ENCODE measurements at regions of chr11 and their contacts with region 1.

Region 1: GRCh38 chr11:61792310-61793085 is at the starts of genes FEN1 and TMEM258:
- DNase-seq: peak; percentile 87
- H3K4me3 Mint-ChIP-seq: peak within 1 kb of the TSS; percentile 98
- H3K27ac Mint-ChIP-seq: peak within 1 kb of the TSS; percentile 99
- H3K4me1 Mint-ChIP-seq: peaks cover 45% of the 10 kb centered on the region
- H3K27me3 Mint-ChIP-seq: no peaks in the 10 kb centered on the region
- total RNA-seq, gene FEN1: 130 and 131 TPM in 2 replicates
- total RNA-seq, gene TMEM258: 187 and 192 TPM in 2 replicates

Region 2: GRCh38 chr11:61679893-61680621 is 112.4 kb before region 1 on chr11 and contains the start of gene DAGLA:
- intact Hi-C with region 1: no loop called
- DNase-seq: peak; percentile 64
- H3K4me3 Mint-ChIP-seq: peak within 1 kb of the TSS; percentile 40
- H3K27ac Mint-ChIP-seq: no peak within 1 kb of the TSS
- H3K4me1 Mint-ChIP-seq: no peaks in the 10 kb centered on the region
- H3K27me3 Mint-ChIP-seq: peaks cover 12% of the 10 kb centered on the region
- total RNA-seq, gene DAGLA: 0.07 TPM in 2 replicates

Region 3: DNA sequence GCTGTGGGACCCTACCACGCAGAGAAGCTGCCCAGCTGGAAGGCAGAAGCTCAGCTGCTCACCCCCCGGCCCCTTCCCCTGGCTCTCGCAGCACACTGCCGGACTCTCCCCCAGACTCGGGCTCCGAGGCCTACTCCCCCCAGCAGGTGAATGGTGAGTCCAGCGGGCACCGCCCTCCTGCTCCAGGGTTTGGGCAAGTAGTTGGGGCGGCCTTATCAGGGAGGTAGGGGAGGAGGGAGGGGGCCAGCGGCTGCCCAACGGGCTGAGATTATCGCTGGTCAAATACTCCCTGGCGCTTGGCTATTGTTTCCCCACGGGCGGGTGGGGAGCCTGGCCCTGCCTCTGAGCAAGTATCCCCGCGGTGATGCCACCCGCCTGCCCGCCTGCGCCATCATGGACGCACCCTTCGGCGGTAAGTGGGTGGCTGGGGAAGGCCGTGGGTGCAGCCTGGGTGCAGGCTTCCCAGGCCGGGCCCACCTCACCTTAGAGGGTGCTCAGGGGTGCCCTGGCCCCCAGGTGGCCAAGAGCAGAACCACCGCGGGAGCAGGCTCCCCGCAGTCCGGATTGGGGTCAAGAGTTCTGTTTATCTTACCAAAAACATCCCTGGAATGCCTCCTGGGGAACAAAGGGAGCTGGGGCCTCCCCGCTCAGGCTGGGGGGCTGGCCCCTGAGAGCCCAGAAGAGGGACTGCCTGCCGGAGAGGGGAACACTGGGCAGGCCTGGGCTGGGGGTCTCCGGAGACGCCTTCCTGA is 23.2 kb before region 1 on chr11:
- intact Hi-C with region 1: no loop called
- DNase-seq: no peak
- H3K4me3 Mint-ChIP-seq: no peak overlapping the region
- H3K27ac Mint-ChIP-seq: no peak overlapping the region
- H3K4me1 Mint-ChIP-seq: no peaks in the 10 kb centered on the region
- H3K27me3 Mint-ChIP-seq: no peaks in the 10 kb centered on the region

Region 4: DNA sequence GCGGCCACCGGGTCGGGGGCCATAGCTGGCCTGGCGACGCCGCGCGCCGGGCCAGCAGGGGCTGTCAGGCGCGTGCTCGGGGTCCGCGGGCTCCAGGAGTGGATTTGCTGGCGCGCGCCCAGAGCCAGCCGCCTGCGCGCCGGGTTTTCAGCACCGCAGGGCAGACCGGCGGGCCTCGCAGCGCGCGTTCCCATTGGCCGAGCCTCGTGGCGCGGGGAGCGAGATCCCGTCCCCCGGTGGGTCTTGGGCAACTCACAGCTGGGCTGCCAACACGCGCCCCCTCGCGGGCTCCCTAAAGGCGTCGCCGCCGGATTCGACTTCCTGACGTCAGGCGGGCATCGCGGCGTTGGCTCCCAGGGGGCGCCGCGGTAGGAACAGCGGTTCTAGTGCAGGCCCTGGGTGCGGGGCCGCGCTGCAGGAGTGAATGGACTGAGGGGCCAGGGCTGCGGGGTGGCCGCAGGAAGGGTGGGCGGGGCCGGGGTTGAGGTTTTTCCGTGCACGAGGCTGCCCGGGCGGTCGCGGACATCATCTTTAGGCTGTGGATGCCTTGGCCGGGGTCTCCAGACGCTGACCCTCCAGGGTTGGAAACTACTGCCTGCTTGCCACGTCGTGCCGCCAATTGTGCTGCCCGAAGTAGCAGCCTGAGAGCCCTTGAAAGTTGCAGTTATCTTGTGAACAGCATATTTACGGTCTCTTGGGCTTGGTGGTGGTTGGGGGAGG is 24.4 kb after region 1 on chr11 and contains the start of gene FADS1:
- intact Hi-C with region 1: loop called (anchors 1 kb)
- DNase-seq: peak; percentile 84
- H3K4me3 Mint-ChIP-seq: peak within 1 kb of the TSS; percentile 99
- H3K27ac Mint-ChIP-seq: peak within 1 kb of the TSS; percentile 96
- H3K4me1 Mint-ChIP-seq: peaks cover 20% of the 10 kb centered on the region
- H3K27me3 Mint-ChIP-seq: no peaks in the 10 kb centered on the region
- total RNA-seq, gene FADS1: 114 and 116 TPM in 2 replicates

Region 5: DNA sequence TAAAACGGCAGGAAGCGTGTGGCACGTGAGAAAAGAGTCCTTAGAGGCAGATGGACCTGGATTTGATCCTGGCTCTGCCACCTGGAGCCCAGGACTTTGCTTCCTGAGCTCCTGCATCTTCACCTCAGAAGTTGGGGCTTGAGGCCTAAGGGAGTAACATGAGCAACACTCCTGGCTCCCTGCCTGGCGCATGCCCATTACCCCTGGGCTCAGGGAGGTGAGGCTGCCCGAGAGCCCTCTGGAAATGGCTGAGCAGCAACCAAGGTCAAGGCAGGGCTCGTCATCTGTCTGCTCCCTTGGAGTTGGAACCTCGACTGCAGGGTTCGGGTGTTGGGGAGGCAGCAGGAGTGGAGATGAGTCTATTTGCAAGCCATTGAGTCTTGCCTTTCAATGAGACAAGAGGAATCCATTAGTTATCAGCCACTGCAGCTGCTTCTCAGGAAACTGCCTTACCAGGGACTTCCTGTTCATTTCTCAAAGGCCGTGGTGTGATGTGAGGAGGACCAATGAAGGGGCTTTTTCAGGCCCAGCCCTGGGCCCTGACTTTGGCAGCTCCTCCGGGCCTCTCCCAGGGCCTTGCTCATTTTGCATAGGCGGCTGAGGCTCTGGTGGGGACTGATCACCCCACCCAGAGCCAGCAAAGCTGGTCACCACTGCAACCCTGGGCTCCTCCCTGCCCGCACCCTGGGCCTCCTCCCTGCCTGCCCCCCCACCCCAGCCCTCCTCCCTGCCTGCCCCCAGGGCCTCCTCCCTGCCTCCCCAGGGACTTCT is 42.0 kb after region 1 on chr11:
- intact Hi-C with region 1: loop called (anchors 1 kb)
- DNase-seq: peak; percentile 77
- H3K4me3 Mint-ChIP-seq: peak overlapping the region; percentile 78
- H3K27ac Mint-ChIP-seq: peak overlapping the region; percentile 99
- H3K4me1 Mint-ChIP-seq: peaks cover 56% of the 10 kb centered on the region
- H3K27me3 Mint-ChIP-seq: no peaks in the 10 kb centered on the region

Region 6: GRCh38 chr11:61947486-61948210 is 155.2 kb after region 1 on chr11:
- intact Hi-C with region 1: loop called (anchors 1 kb)
- DNase-seq: peak; percentile 49
- H3K4me3 Mint-ChIP-seq: no peak overlapping the region
- H3K27ac Mint-ChIP-seq: no peak overlapping the region
- H3K4me1 Mint-ChIP-seq: no peaks in the 10 kb centered on the region
- H3K27me3 Mint-ChIP-seq: peaks cover 4% of the 10 kb centered on the region

Region 7: DNA sequence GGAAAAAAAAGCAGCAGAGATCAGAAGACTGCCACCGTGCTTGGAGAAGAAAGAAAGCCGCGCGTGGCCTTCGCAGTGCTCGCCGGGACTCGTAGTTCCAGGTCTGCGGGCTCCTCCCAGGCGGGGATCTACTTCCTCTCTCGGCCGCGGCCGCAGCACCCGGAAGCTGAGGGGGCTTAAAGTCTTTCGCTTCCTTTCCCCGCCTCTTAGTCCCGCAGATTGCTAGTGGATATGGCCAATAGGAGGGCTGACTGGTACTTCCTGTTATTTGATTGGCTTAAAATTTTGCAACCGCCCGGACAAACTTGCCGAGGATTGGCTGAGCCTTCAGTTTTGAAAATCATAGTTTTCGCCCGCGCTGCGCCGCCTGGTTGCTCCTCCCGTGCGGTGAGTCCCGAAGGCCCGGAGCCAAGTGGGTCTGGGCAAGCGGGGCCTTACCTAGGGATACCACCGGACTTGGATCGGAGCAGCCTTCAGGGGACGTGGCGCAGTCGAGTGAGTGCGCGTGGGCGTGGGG is 331.2 kb after region 1 on chr11 and contains the start of gene INCENP:
- intact Hi-C with region 1: loop called (anchors 5 kb)
- DNase-seq: peak; percentile 95
- H3K4me3 Mint-ChIP-seq: peak within 1 kb of the TSS; percentile 96
- H3K27ac Mint-ChIP-seq: peak within 1 kb of the TSS; percentile 90
- H3K4me1 Mint-ChIP-seq: peaks cover 29% of the 10 kb centered on the region
- H3K27me3 Mint-ChIP-seq: peaks cover 7% of the 10 kb centered on the region
- total RNA-seq, gene INCENP: 105 and 108 TPM in 2 replicates